ENCODE measurements at regions of chr16 and their contacts with region 1.

Region 1: DNA sequence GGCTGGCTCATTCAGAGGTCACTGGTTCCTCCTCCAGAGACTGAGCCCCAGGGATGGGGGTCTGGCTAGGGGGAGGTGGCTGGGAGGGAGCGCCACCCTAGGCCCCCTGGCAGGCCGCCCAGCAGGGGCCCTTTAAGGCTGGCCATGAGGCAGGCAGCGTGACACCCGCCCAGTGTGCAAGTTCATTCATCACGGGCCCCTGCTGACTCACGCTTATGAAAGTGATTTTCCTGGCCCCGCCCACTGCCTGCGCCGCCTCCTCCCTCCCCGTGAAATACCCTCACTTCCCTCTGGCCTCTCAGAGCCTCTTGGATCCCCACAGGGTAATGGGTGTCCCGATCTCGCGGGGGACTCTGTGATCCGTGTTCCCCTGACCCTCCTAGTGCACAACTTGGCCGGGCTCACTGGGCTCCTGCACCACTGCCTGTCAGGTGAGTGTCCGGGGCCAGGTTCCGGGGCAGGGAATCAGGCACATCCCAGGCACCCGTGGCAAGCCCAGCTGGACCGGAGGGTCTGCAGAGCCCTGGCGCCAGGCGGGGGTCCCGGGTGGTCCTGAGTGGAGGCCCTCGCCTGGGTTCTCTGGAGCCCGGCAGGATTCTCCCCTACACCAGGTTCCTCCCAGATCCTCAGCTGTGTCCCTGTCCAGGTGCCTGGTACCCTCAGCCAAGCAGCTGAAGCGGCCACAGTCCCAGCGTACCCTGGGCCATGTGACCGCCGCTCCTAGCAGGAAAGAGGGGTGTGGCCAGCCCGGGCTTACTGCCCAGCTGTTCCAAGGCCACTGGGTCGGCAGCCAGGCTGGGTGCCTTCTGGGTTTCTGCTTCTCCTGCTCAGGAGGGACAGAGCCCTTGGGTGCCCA is at the start of gene OSGIN1:
- DNase-seq: peak; percentile 97
- H3K4me3 Mint-ChIP-seq: peak within 1 kb of the TSS; percentile 77
- H3K27ac Mint-ChIP-seq: peak within 1 kb of the TSS; percentile 70
- H3K4me1 Mint-ChIP-seq: peaks cover 8% of the 10 kb centered on the region
- H3K27me3 Mint-ChIP-seq: no peaks in the 10 kb centered on the region
- CTCF ChIP-seq: no peak
- total RNA-seq, gene OSGIN1: 3.7 and 6.3 TPM in 2 replicates

Region 2: GRCh38 chr16:83926726-83927397 is 26.3 kb before region 1 on chr16:
- CTCF ChIA-PET with region 1: interaction called, 71 read pairs
- POLR2A ChIA-PET with region 1: interaction called, 58 read pairs
- intact Hi-C with region 1: loop called (anchors 1 kb)
- DNase-seq: peak; percentile 86
- H3K4me3 Mint-ChIP-seq: peak overlapping the region; percentile 62
- H3K27ac Mint-ChIP-seq: no peak overlapping the region
- H3K4me1 Mint-ChIP-seq: peaks cover 5% of the 10 kb centered on the region
- H3K27me3 Mint-ChIP-seq: no peaks in the 10 kb centered on the region
- CTCF ChIP-seq: peak; percentile 86

Region 3: DNA sequence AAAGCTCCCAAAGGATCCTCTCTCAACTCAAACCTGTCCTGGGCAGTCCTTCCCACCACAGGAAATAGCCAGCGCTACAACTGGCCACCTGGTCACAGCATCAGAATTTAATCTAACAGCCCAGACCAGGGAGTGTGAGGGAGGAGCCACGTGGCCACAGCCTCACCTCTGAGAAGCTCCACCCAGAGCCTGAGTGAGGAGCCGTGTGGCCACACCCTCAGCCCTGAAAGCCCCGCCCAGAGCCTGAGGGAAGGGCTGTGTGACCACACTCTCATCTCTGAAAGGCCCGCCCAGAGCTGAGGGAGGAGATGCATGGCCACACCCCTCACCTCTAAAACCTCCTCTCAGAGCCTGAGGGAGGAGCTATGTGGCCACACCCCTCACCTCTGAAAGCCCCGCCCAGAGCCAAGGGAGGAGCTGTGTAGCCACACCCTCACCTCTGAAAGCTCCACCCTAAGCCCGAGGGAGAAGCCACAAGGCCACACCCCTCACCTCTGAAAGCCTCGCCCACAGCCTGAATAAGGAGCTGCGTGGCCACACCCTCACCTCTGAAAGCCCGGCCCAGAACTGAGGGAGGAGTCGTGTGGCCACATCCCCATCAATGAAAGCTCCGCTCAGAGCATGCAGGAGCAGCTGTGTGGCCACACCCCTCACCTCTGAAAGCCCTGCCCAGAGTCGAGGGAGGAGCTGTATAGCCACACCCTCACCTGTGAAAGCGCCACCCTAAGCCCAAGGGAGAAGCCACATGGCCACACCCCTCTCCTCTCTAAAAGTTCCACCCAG is 60.8 kb after region 1 on chr16:
- CTCF ChIA-PET with region 1: interaction called, 15 read pairs
- POLR2A ChIA-PET with region 1: no interaction called
- intact Hi-C with region 1: no loop called
- DNase-seq: peak; percentile 98
- H3K4me3 Mint-ChIP-seq: no peak overlapping the region
- H3K27ac Mint-ChIP-seq: peak overlapping the region; percentile 63
- H3K4me1 Mint-ChIP-seq: peaks cover 5% of the 10 kb centered on the region
- H3K27me3 Mint-ChIP-seq: no peaks in the 10 kb centered on the region
- CTCF ChIP-seq: no peak

Region 4: DNA sequence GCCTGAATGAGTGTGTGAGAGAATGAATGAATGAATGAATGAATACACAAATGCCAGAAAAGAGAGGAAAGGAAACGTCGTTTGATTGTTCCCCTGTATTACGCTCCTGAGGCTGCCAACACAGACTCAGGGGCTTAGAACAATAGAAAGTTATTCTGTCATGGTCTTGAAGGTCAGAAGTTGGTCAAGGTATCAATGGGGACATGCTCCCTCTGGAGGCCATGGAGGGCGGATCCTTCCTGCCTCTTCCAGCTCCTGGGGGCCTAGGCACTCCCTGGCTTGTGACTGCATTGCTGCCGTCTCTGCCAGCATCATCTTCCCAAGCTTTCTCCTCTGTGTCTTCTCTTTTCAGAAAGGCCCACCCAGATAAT is 90.9 kb after region 1 on chr16:
- CTCF ChIA-PET with region 1: interaction called, 52 read pairs
- POLR2A ChIA-PET with region 1: no interaction called
- intact Hi-C with region 1: loop called (anchors 1 kb)
- DNase-seq: peak; percentile 57
- H3K4me3 Mint-ChIP-seq: no peak overlapping the region
- H3K27ac Mint-ChIP-seq: no peak overlapping the region
- H3K4me1 Mint-ChIP-seq: peaks cover 12% of the 10 kb centered on the region
- H3K27me3 Mint-ChIP-seq: peaks cover 31% of the 10 kb centered on the region
- CTCF ChIP-seq: peak; percentile 57

Region 5: DNA sequence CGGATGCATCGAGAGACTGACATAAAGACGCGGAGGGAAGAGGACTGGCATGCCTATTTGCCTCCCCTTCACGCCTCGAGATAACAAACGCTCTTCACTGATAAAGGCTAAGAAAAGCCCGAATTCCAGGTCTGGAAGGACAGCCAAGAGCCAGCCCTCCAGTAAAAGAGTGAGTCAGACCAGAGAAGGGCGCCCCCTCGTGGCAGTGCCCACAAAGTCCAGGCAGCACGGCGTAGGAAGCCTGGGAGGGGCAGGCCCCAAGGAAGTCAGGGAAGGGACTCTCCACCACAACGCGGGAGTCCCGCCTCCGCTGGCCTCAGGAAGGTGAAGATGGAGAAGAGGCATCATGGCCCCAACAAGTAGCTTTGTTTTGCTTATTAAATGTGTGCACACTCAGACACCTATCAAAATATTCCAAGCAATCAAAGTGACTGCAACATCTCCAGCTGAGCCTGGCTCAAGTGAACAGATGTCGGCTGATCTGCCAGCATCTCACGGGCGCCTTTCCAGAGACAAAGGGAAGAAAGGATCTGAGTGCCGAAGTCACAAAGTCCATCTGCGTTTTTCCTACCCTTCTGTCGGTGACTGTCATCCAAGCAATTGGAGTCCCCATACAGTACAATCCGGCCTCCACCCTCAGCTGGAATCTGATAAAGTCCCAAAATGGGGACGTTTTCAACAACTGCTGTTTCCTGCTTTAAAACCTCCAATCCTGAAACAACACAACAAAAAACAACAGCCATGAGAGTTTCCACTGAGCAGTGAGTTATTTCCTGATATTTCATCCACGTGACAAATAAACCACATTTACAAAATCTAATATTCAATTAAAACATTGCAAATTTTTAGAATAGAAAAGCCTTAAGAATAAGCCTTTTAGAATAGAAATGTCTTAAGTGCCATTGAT is 109.8 kb after region 1 on chr16:
- CTCF ChIA-PET with region 1: interaction called, 220 read pairs
- POLR2A ChIA-PET with region 1: interaction called, 4 read pairs
- intact Hi-C with region 1: loop called (anchors 1 kb)
- DNase-seq: peak; percentile 68
- H3K4me3 Mint-ChIP-seq: no peak overlapping the region
- H3K27ac Mint-ChIP-seq: no peak overlapping the region
- H3K4me1 Mint-ChIP-seq: no peaks in the 10 kb centered on the region
- H3K27me3 Mint-ChIP-seq: no peaks in the 10 kb centered on the region
- CTCF ChIP-seq: peak; percentile 89

Region 6: DNA sequence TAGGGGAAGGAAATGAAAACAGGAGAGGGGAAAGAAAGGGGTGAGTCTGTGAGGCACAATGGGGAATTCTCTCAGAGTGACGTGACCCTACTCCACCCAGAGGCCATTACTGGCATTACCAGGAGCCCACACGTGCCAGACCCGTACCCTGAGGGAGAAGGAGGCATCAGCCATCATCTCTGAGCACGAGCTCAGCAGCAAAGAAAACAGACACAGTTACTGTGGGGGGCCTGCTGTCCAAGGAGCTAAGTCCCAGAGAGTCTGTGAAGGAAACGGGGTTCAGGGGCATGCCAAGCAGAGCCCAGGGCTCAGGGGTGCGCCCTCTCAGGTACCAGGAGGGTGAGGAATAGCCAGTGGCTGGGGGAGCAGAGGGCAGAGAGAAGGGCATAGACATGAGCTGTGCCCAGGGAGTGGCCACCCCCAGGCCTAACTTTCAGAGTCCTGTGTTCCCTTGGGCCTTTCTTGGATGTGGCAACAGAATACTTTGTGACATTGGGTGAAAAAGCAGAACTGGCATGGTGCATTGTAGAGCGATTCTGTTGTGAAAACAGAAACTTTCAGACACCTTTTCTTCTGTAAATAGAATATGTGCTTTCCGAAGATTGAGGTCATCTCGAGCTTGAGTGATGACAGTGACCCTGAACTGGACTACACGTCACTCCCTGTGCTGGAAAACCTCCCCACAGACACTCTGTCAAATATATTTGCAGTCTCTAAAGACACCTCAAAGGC is 222.3 kb after region 1 on chr16:
- CTCF ChIA-PET with region 1: interaction called, 7 read pairs
- POLR2A ChIA-PET with region 1: no interaction called
- intact Hi-C with region 1: loop called (anchors 10 kb)
- DNase-seq: peak; percentile 67
- H3K4me3 Mint-ChIP-seq: no peak overlapping the region
- H3K27ac Mint-ChIP-seq: peak overlapping the region; percentile 41
- H3K4me1 Mint-ChIP-seq: peaks cover 6% of the 10 kb centered on the region
- H3K27me3 Mint-ChIP-seq: no peaks in the 10 kb centered on the region
- CTCF ChIP-seq: peak; percentile 62